ENCODE measurements at regions of chr3 and their contacts with region 1.

Region 1: GRCh38 chr3:52259035-52259434 is 13.5 kb downstream of the PPM1M start:
- DNase-seq: no peak
- ATAC-seq: no peak
- H3K4me3 Mint-ChIP-seq: no peak overlapping the region
- H3K27ac Mint-ChIP-seq: peak overlapping the region; percentile 79
- H3K4me1 Mint-ChIP-seq: peaks cover 92% of the 10 kb centered on the region
- H3K27me3 Mint-ChIP-seq: no peaks in the 10 kb centered on the region
- CTCF ChIP-seq: no peak

Region 2: DNA sequence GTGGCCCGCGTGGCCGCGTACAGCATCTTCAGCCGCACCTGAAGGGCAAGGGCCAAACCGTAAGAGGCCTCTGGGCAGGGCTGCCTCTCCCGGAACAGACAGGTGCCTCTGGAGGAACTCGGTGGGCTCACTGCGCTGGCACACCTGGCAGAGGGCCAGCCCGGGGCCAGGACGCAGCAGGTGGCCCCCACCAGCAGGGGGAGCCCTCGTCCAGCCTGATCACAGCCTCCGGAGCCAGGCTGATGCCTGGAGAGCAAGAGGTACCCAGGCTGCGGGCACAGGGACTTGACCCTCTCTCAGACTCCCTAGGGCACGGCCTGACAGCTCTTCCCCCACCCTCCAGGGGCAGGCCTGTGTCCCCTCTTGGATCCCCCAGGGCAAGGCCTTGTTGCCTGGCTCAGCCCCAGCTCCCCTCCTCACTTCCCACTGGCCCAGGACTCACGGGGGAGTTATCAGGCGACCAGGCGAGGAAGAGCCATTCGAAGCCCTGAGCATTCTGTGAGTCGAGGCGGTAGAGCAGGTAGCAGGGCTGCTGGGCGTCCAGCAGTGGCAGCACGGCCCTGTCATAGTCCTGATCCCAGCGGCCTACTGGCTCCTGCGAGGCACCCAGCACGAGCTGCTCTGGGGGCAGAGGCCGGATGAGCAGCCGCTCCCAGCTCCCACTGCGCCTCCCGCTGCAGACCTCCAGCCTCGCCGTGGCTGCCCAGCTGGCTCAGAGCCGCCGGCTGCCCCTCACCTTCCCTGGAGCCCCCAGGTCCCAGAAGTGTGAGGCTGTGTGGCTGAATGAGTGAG is 27.3 kb before region 1 on chr3:
- CTCF ChIA-PET with region 1: interaction called, 21 read pairs
- POLR2A ChIA-PET with region 1: interaction called, 949 read pairs
- intact Hi-C with region 1: no loop called
- DNase-seq: peak; percentile 89
- ATAC-seq: peak; percentile 82
- H3K4me3 Mint-ChIP-seq: peak overlapping the region; percentile 8
- H3K27ac Mint-ChIP-seq: peak overlapping the region; percentile 82
- H3K4me1 Mint-ChIP-seq: peaks cover 62% of the 10 kb centered on the region
- H3K27me3 Mint-ChIP-seq: no peaks in the 10 kb centered on the region
- CTCF ChIP-seq: peak; percentile 96

Region 3: GRCh38 chr3:52245322-52246263 is 13.4 kb before region 1 on chr3 and contains the start of gene PPM1M:
- CTCF ChIA-PET with region 1: interaction called, 25 read pairs
- POLR2A ChIA-PET with region 1: interaction called, 949 read pairs
- intact Hi-C with region 1: no loop called
- DNase-seq: peak; percentile 67
- ATAC-seq: peak; percentile 35
- H3K4me3 Mint-ChIP-seq: peak within 1 kb of the TSS; percentile 94
- H3K27ac Mint-ChIP-seq: peak within 1 kb of the TSS; percentile 95
- H3K4me1 Mint-ChIP-seq: peaks cover 78% of the 10 kb centered on the region
- H3K27me3 Mint-ChIP-seq: no peaks in the 10 kb centered on the region
- CTCF ChIP-seq: no peak
- total RNA-seq, gene PPM1M: 94.3 to 100 TPM

Region 4: GRCh38 chr3:52270252-52270754 is 11.3 kb after region 1 on chr3:
- CTCF ChIA-PET with region 1: interaction called, 17 read pairs
- POLR2A ChIA-PET with region 1: interaction called, 65 read pairs
- intact Hi-C with region 1: no loop called
- DNase-seq: no peak
- ATAC-seq: no peak
- H3K4me3 Mint-ChIP-seq: peak overlapping the region; percentile 99
- H3K27ac Mint-ChIP-seq: peak overlapping the region; percentile 96
- H3K4me1 Mint-ChIP-seq: peaks cover 81% of the 10 kb centered on the region
- H3K27me3 Mint-ChIP-seq: no peaks in the 10 kb centered on the region
- CTCF ChIP-seq: peak; percentile 15

Region 5: GRCh38 chr3:52350416-52350815 is 91.4 kb after region 1 on chr3:
- CTCF ChIA-PET with region 1: no interaction called
- POLR2A ChIA-PET with region 1: no interaction called
- intact Hi-C with region 1: no loop called
- DNase-seq: no peak
- ATAC-seq: no peak
- H3K4me3 Mint-ChIP-seq: no peak overlapping the region
- H3K27ac Mint-ChIP-seq: no peak overlapping the region
- H3K4me1 Mint-ChIP-seq: no peaks in the 10 kb centered on the region
- H3K27me3 Mint-ChIP-seq: no peaks in the 10 kb centered on the region
- CTCF ChIP-seq: no peak

Measured in activated CD8-positive, alpha-beta T cell treated with anti-CD3 and anti-CD28 coated beads for 36 hours (primary cell).